ENCODE measurements at regions of chr5 and their contacts with region 1.

Region 1: DNA sequence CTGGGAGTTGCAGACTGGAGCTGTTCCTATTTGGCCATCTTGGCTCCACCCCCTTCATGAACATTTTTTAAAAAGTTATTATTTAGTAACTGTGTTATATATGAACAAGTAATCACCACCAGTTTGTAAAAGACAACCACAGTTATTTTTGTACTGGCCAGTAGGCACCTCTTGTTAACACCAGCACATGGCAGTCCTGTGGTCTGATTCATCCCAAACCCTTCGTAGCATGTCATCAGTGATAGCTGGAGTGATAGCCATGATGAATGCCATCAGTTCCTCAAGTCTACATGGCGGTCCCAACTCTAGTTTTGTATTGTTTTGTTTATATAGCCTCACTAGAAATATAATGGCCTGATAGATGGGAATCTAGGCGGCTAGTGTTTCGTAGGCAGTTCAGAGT is 74.2 kb downstream of the CDC42SE2 start:
- DNase-seq: no peak
- H3K4me3 ChIP-seq: no peak overlapping the region
- H3K4me3 Mint-ChIP-seq: peak overlapping the region in 7 of 8 donors; percentile 36 to 84 (median 70)
- H3K27ac ChIP-seq: peak overlapping the region; percentile 52
- H3K27ac Mint-ChIP-seq: peak overlapping the region; percentile 63 to 97 (median 94)
- H3K4me1 ChIP-seq: peaks cover 58% of the 10 kb centered on the region
- H3K4me1 Mint-ChIP-seq: peaks cover 62 to 95% (median 80%) of the 10 kb centered on the region in 4 donors
- H3K27me3 ChIP-seq: no peaks in the 10 kb centered on the region
- H3K27me3 Mint-ChIP-seq: no peaks in the 10 kb centered on the region

Region 2: DNA sequence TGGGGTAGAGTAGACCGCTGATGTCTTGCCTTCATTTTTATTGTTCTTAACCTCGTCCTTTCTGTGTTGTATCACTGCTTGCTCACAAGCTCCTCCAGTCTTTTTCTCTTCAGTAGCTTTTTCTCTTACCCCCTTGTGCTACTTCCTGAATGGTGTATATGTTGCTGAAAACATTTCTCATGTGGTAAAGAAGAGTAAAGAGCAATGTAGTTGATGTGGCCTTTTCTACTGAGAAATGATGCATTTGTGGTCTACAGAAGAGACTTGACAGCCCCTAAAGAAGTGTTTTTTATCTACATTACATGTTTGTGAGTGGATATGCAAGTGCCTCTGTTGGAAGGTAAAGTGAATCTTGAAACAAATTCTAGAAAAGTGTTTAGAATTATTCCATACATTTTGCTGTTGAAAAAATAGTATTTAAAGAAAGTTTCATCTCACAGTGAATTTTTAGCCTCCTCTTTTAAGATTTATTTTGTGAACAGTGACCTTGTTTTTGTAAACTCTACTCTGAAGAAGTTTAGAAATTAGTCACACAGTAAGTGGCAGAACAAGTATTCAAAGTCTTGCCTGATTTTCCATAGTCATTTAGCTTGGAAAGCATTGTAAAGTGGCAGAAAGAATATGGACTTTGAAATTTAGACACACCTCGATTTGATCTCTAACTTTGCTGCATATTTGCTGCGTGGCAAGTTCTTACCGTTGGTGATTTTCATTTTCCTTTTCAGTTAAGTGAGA is 56.8 kb before region 1 on chr5:
- CTCF ChIA-PET with region 1: no interaction called
- POLR2A ChIA-PET with region 1: interaction called, 6 read pairs
- intact Hi-C with region 1: loop called (anchors 2 kb)
- DNase-seq: peak; percentile 57 to 89 (median 85)
- H3K4me3 ChIP-seq: peak overlapping the region; percentile 0 to 37
- H3K4me3 Mint-ChIP-seq: peak overlapping the region; percentile 57 to 90 (median 82)
- H3K27ac ChIP-seq: peak overlapping the region; percentile 63
- H3K27ac Mint-ChIP-seq: peak overlapping the region; percentile 71 to 95 (median 87)
- H3K4me1 ChIP-seq: peaks cover 89% of the 10 kb centered on the region
- H3K4me1 Mint-ChIP-seq: peaks cover 54 to 89% (median 73%) of the 10 kb centered on the region in 4 donors
- H3K27me3 ChIP-seq: no peaks in the 10 kb centered on the region
- H3K27me3 Mint-ChIP-seq: no peaks in the 10 kb centered on the region